GM18951 (cell line): ENCODE measurements at regions of chr18 and their contacts with region 1.

Region 1: DNA sequence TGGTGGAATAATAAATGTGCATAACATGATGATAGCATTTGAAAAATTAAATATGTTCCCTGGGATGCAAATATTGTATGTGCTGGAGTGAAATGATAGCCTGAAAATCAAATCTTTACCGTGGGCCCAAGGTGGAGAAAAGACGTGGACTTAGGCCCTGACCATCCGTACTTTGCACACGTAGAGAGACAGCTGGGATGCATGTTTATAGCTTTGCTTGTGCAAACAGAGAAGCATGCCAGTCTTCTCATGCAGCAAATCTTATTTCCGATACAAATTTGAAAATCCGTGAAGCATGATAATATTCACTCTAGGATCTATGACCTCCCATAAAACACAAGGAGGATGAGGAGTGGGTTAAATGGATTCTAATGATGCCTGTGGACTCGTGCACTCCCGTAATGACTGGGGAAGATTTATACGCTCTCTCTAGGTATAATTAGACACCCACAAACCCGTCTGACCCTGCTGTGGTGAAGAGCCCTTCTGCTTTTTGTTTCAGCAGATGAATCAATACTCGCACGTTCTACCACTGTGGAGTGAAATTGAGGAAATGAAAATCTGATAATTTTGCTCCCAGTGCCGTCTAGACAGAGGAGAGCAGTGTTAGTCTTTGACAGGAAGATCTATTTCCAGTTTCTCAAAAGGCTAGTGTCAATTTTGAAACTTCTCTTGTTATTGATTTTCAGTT is 810.3 kb upstream of the SALL3 start:
- POLR2A ChIP-seq: no peak

Region 2: DNA sequence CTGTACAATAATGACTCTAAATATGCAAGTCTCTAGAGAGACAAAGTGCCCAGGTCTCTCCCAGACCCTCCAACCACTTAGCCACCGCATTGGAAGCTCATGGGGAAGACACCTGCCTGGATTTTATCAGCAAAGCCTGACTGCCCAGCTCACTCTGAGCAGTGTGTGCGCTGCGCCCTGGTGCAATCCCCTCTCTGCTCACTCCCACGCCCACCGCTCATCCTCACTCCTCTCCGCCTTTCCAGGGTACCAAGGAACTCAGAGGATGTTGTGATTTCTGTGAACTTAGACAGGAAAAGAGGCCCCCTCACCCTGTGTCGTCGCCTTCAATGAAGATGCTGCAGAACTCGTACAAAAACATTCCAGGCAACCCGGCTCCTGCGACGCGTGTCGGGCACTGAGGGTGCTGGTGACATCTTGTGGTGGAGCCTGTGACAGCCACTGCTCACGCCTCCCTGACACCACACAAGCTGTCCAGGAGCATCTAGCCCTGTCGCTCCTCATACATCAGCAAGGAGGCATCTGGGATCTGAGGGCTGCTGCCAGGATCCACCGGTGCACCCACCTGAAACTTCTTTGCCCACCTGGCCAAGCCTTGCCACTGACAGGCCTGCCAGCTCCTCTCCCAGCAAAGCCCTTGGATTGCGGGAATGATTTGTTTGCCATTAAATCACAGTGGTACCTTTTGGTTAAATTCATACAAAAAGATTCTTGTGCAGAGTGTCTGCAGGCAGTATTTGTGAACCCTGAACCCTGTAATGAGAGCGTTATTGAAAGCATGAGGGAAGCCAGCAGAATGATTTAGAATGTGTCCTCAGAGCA is 1894.6 kb before region 1 on chr18:
- in situ Hi-C with region 1: loop called (anchors 25 kb)
- POLR2A ChIP-seq: no peak

Region 3: GRCh38 chr18:78376046-78376445 is 206.7 kb after region 1 on chr18:
- in situ Hi-C with region 1: no loop called
- POLR2A ChIP-seq: no peak